CD4-positive, alpha-beta memory T cell (primary cell): ENCODE measurements at regions of chr13 and their contacts with region 1.

Region 1: DNA sequence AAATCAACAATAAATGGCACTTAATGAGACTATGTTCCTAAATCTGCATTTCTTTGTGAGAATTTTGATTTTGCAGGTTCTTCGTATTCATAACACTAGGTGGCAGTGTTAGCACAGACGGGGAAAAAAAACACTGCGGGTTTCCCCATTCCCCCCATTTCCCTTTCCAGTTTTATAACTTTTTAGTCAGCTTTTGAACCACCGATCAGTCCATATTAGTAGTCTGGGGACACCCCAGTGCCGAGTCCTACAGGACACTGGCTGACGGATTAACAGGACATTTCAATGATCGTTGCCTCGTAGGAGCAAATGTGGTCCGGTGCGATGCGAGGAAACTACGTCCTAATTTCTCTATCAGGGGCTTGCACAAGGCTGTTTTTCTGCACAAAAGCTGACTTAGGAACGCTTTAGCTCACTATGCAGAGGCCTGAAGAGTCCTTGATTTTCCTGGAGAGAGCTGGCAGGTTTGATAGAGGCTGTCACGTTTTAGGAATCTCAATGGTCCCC is 234.3 kb downstream of the LMO7 start:
- DNase-seq: peak in 4 of 5 donors; percentile 41 to 52 (median 44)
- H3K4me3 ChIP-seq: peak overlapping the region; percentile 26 to 30
- H3K4me3 Mint-ChIP-seq: peak overlapping the region; percentile 68 to 86 (median 80)
- H3K27ac ChIP-seq: peak overlapping the region; percentile 44
- H3K27ac Mint-ChIP-seq: peak overlapping the region; percentile 71 to 90 (median 89)
- H3K4me1 ChIP-seq: peaks cover 19% of the 10 kb centered on the region
- H3K4me1 Mint-ChIP-seq: peaks cover 6 to 23% (median 18%) of the 10 kb centered on the region in 4 donors
- H3K27me3 ChIP-seq: no peaks in the 10 kb centered on the region
- H3K27me3 Mint-ChIP-seq: no peaks in the 10 kb centered on the region

Region 2: DNA sequence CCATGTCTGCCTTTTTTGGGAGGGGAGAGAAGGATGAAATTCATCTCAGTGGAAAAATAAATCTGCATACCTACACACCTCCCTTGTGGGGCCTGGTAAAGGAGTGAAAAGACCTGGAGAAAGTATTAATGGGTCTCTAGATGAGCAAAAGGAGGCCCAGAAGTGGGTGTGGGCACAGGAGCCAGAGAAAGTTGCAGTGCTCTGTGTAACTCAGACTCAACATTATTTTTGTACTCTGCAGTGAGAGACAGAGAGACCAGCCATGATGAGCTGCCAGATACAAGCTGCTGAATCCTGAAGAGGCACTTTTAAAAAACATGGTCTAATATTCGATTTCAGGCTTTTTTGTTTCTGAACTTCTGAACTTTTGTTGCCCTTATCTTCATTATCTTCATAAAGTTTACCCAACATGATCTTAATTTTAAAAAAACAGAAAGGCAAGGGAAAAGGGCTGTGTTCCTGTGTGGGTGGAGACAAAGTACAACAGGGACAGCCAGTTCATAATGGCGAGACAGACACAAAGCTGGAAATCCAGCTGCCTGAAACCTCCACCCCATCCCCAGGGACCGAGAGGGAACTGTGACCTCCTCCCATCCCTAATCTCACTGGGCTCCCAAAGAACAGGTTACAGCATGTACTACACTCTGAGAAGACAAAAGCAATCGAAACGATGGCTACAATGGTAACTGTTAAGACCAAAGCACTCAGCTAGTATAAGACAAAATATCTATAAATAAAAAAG is 1813.5 kb before region 1 on chr13:
- CTCF ChIA-PET with region 1: no interaction called
- POLR2A ChIA-PET with region 1: no interaction called
- intact Hi-C with region 1: no loop called
- DNase-seq: no peak
- H3K4me3 ChIP-seq: no peak overlapping the region
- H3K4me3 Mint-ChIP-seq: peak overlapping the region in 5 of 8 donors; percentile 8 to 47 (median 17)
- H3K27ac ChIP-seq: no peak overlapping the region
- H3K27ac Mint-ChIP-seq: peak overlapping the region in 4 of 7 donors; percentile 24 to 61 (median 38)
- H3K4me1 ChIP-seq: peaks cover 95% of the 10 kb centered on the region
- H3K4me1 Mint-ChIP-seq: peaks cover 67 to 92% (median 83%) of the 10 kb centered on the region in 4 donors
- H3K27me3 ChIP-seq: no peaks in the 10 kb centered on the region
- H3K27me3 Mint-ChIP-seq: no peaks in the 10 kb centered on the region

Region 3: GRCh38 chr13:75760131-75761021 is 110.1 kb before region 1 on chr13:
- CTCF ChIA-PET with region 1: interaction called, 23 read pairs
- POLR2A ChIA-PET with region 1: interaction called, 3 read pairs
- intact Hi-C with region 1: loop called (anchors 5 kb)
- DNase-seq: peak in 4 of 5 donors; percentile 24 to 29 (median 26)
- H3K4me3 ChIP-seq: peak overlapping the region in 1 of 2 donors; percentile 20
- H3K4me3 Mint-ChIP-seq: peak overlapping the region; percentile 77 to 91 (median 84)
- H3K27ac ChIP-seq: no peak overlapping the region
- H3K27ac Mint-ChIP-seq: peak overlapping the region; percentile 62 to 87 (median 77)
- H3K4me1 ChIP-seq: peaks cover 64% of the 10 kb centered on the region
- H3K4me1 Mint-ChIP-seq: peaks cover 54 to 80% (median 66%) of the 10 kb centered on the region in 4 donors
- H3K27me3 ChIP-seq: no peaks in the 10 kb centered on the region
- H3K27me3 Mint-ChIP-seq: no peaks in the 10 kb centered on the region

Region 4: DNA sequence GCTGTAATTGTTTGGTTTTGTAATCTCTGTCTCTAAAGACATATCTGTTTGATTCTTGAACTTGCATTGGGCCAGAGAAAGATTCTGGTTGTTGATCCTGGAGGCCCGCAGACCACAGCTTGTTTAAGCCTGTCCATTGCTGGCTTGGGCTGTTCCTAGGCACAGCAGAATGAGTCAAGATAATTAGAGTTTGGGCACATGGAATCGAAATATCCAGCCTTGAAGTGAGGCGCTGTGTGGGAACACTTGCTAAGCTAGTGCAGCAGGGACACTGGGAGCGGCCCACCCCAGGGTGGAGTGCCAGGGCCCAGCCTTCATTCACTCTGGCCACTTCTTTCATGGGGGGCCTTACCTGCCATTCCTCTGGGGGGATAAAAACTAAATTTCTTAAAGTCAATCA is 14.6 kb before region 1 on chr13:
- CTCF ChIA-PET with region 1: interaction called, 28 read pairs
- POLR2A ChIA-PET with region 1: no interaction called
- intact Hi-C with region 1: no loop called
- DNase-seq: no peak
- H3K4me3 ChIP-seq: no peak overlapping the region
- H3K4me3 Mint-ChIP-seq: no peak overlapping the region
- H3K27ac ChIP-seq: no peak overlapping the region
- H3K27ac Mint-ChIP-seq: no peak overlapping the region
- H3K4me1 ChIP-seq: no peaks in the 10 kb centered on the region
- H3K4me1 Mint-ChIP-seq: no peaks in the 10 kb centered on the region
- H3K27me3 ChIP-seq: no peaks in the 10 kb centered on the region
- H3K27me3 Mint-ChIP-seq: no peaks in the 10 kb centered on the region

Region 5: GRCh38 chr13:76473552-76474134 is 603.2 kb after region 1 on chr13:
- CTCF ChIA-PET with region 1: interaction called, 71 read pairs
- POLR2A ChIA-PET with region 1: no interaction called
- intact Hi-C with region 1: loop called (anchors 1 kb)
- DNase-seq: peak; percentile 61 to 67 (median 66)
- H3K4me3 ChIP-seq: no peak overlapping the region
- H3K4me3 Mint-ChIP-seq: no peak overlapping the region
- H3K27ac ChIP-seq: no peak overlapping the region
- H3K27ac Mint-ChIP-seq: no peak overlapping the region
- H3K4me1 ChIP-seq: no peaks in the 10 kb centered on the region
- H3K4me1 Mint-ChIP-seq: no peaks in the 10 kb centered on the region
- H3K27me3 ChIP-seq: no peaks in the 10 kb centered on the region
- H3K27me3 Mint-ChIP-seq: peaks cover 0 to 6% of the 10 kb centered on the region in 2 donors

Region 6: DNA sequence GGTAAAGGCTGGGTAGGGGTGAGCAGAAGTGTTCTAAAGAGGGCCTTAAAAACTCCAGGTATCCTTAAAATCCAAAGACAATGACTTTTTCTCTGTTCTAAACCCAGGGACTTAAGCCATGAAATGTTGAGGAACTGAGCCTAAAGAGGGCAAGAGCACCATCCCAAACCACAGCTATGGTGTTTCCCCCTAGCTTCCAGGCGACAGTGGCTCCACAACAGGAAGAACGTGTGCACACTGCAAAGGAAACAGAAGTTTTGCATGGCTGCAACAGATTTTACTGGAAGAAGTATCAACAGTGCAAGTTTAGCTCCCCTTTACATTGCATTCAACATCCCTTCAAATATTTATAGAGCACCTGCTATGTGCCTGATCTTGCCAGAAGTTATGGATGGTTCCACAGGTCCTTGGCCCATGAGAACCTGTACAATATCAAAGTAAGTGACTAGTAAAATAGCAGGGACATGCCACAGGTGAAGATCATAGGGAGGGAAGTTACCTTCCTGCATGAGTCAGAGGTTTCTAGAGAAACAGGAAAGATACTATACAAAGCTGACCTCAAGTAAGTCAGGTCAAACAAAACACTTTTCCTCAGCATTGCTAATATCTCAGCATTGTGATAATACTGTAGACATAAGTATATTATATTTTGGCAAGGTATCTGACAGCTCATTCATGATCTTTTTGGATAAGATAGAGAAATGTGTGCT is 1024.1 kb after region 1 on chr13:
- CTCF ChIA-PET with region 1: interaction called, 10 read pairs
- POLR2A ChIA-PET with region 1: no interaction called
- intact Hi-C with region 1: no loop called
- DNase-seq: no peak
- H3K4me3 ChIP-seq: no peak overlapping the region
- H3K4me3 Mint-ChIP-seq: peak overlapping the region in 1 of 8 donors; percentile 20
- H3K27ac ChIP-seq: no peak overlapping the region
- H3K27ac Mint-ChIP-seq: no peak overlapping the region
- H3K4me1 ChIP-seq: peaks cover 11% of the 10 kb centered on the region
- H3K4me1 Mint-ChIP-seq: peaks cover 7 to 14% (median 12%) of the 10 kb centered on the region in 4 donors
- H3K27me3 ChIP-seq: no peaks in the 10 kb centered on the region
- H3K27me3 Mint-ChIP-seq: peaks cover 1 to 2% of the 10 kb centered on the region in 2 donors

Region 7: GRCh38 chr13:76903544-76904162 is 1033.2 kb after region 1 on chr13:
- CTCF ChIA-PET with region 1: interaction called, 127 read pairs
- POLR2A ChIA-PET with region 1: no interaction called
- intact Hi-C with region 1: loop called (anchors 1 kb)
- DNase-seq: peak; percentile 60 to 68 (median 64)
- H3K4me3 ChIP-seq: no peak overlapping the region
- H3K4me3 Mint-ChIP-seq: no peak overlapping the region
- H3K27ac ChIP-seq: no peak overlapping the region
- H3K27ac Mint-ChIP-seq: no peak overlapping the region
- H3K4me1 ChIP-seq: no peaks in the 10 kb centered on the region
- H3K4me1 Mint-ChIP-seq: no peaks in the 10 kb centered on the region
- H3K27me3 ChIP-seq: no peaks in the 10 kb centered on the region
- H3K27me3 Mint-ChIP-seq: peaks cover 10 to 12% of the 10 kb centered on the region in 2 donors